Activated CD8-positive, alpha-beta T cell treated with anti-CD3 and anti-CD28 coated beads, Interleukin-2, amount 10 ng/mL, durations not matched to agents 7 days and 5 days (primary cell): ENCODE measurements at regions of chr12 and their contacts with region 1.

Region 1: DNA sequence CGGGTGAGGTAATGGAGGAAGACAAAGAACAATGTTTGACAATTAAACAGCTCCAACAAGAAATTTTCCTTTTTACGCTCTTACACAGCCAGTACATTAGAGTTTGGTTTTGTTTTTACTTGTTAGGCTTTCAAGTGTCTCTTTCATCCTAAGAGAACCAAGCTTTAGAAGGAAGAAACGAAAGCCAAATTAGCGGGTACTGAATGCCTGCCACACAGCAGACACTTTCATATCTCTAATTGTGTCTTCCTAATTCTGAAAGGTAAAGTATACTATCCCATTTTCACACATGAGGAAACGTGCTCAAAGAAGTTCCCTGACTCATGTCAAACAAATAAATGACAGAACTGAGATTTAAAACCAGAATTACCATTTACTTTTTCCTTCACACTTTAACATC is 65.0 kb downstream of the CDK17 start:
- DNase-seq: no peak
- ATAC-seq: peak; percentile 74
- H3K4me3 Mint-ChIP-seq: peak overlapping the region; percentile 41
- H3K27ac Mint-ChIP-seq: peak overlapping the region; percentile 46
- H3K4me1 Mint-ChIP-seq: peaks cover 34% of the 10 kb centered on the region
- H3K27me3 Mint-ChIP-seq: no peaks in the 10 kb centered on the region

Region 2: GRCh38 chr12:96347130-96347699 is 11.9 kb after region 1 on chr12:
- CTCF ChIA-PET with region 1: interaction called, 15 read pairs
- POLR2A ChIA-PET with region 1: no interaction called
- DNase-seq: no peak
- ATAC-seq: no peak
- H3K4me3 Mint-ChIP-seq: peak overlapping the region; percentile 55
- H3K27ac Mint-ChIP-seq: peak overlapping the region; percentile 57
- H3K4me1 Mint-ChIP-seq: peaks cover 69% of the 10 kb centered on the region
- H3K27me3 Mint-ChIP-seq: no peaks in the 10 kb centered on the region